Thyroid gland (tissue), 4 donors: ENCODE measurements at regions of chr9 and their contacts with region 1.

Region 1: GRCh38 chr9:2066312-2067273 is 51.4 kb downstream of the SMARCA2 start:
- DNase-seq: peak; percentile 40 to 51
- H3K4me3 ChIP-seq: no peak overlapping the region
- H3K27ac ChIP-seq: peak overlapping the region; percentile 52 to 83 (median 63)
- H3K4me1 ChIP-seq: peaks cover 14 to 19% of the 10 kb centered on the region in 2 donors
- H3K27me3 ChIP-seq: no peaks in the 10 kb centered on the region
- CTCF ChIP-seq: peak in 4 of 6 experiments; percentile 50 to 71 (median 65)
- POLR2A ChIP-seq: peak in 1 of 2 donors; percentile 52

Region 2: DNA sequence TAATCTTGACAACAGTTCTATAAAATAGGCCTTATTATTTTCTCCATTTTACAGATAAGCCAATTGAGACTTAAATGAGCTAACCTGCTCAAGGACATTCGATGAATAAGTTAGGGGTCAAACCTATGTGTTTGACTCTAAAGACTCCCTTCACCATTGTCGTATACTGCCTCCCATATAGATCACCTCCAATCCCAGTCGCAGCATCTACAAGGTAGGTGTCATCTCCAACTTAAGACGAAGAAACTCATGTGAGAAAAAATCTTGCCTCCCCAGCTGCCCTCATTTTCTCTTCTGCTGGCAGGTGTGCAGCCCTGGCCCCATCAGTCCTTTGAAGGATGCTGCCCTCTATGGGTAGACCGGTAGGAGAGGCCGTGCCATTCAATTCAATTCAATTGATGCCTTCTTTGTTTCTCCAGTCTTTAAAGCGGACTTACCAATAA is 126.6 kb before region 1 on chr9:
- intact Hi-C with region 1: loop called (anchors 10 kb)
- DNase-seq: peak; percentile 6 to 21
- H3K4me3 ChIP-seq: no peak overlapping the region
- H3K27ac ChIP-seq: no peak overlapping the region
- H3K4me1 ChIP-seq: no peaks in the 10 kb centered on the region
- H3K27me3 ChIP-seq: no peaks in the 10 kb centered on the region
- CTCF ChIP-seq: peak in 5 of 6 experiments; percentile 15 to 72 (median 44)
- POLR2A ChIP-seq: no peak

Region 3: DNA sequence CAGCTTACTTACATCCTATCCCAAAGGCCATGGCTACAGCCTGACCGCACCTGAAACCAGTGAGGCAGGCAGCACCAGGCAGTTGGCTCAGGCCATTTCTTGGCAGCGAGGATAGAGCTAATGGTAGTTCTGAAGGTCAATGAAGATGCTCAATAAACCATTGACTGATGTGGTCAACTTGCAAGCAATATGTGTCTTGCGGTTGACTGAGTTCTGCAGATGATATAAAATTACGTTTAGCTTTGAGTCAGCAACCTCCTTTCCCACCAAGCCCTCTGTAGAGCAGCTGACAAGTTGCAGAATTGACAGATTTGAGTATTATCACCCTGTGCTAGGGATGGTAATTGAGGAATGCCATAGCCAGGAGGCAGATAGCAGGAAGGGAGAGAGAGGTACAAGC is 966.3 kb after region 1 on chr9:
- intact Hi-C with region 1: no loop called
- DNase-seq: no peak
- H3K4me3 ChIP-seq: no peak overlapping the region
- H3K27ac ChIP-seq: no peak overlapping the region
- H3K4me1 ChIP-seq: no peaks in the 10 kb centered on the region
- H3K27me3 ChIP-seq: no peaks in the 10 kb centered on the region
- CTCF ChIP-seq: no peak
- POLR2A ChIP-seq: no peak